ENCODE measurements at regions of chr2 and their contacts with region 1.

Region 1: DNA sequence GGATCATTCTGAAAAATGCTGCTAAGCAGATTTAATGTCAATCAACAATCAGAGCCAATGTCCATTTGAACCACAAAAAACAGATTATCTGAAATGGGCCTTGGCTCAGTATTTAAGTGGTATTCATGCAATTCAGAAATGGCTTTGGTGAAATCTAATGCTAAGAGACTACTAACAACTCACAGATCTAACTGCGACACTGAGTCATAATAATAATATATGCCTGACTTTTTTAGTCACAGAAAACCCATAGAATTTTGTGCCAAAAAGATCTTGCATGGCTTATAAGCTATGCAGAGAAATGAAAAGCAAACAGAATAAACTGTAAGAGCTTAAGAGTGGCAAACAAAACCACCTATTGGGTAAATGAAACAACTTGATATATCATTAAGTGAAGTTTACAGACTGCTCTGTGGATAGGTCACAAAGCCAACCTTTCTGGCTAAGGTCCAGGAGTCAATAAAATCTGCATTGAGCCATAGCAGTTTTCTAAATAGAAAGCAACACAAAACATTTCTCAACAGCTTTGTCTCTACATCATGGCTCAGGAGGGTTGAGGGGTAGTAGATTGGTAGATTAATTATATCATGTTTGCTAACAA is 234.3 kb downstream of the LRATD1 start:
- DNase-seq: no peak
- H3K4me3 ChIP-seq: no peak overlapping the region
- H3K27ac ChIP-seq: no peak overlapping the region
- H3K4me1 ChIP-seq: no peaks in the 10 kb centered on the region
- H3K27me3 ChIP-seq: no peaks in the 10 kb centered on the region
- CTCF ChIP-seq: no peak
- POLR2A ChIP-seq: no peak

Region 2: DNA sequence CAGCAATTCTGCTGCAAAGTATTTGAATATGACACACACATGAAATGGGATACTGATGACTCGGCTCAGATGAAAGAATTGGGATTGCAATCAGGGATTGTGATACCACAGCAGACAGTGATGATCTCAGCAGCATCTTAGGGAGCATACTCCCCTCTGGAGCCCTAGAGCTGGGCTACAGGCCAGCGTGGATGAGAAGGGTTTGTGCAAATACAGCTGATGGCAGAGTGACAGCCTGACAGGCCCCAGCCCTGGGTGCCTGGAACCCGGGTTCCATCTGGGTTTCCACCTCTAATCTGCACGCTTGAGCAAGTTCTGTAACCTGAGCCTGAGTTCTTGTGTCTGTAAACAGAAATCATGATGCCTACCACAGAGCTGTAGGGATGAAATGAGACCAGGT is 183.6 kb after region 1 on chr2:
- intact Hi-C with region 1: no loop called
- DNase-seq: peak in 1 of 2 donors; percentile 65
- H3K4me3 ChIP-seq: no peak overlapping the region
- H3K27ac ChIP-seq: no peak overlapping the region
- H3K4me1 ChIP-seq: no peaks in the 10 kb centered on the region
- H3K27me3 ChIP-seq: no peaks in the 10 kb centered on the region
- CTCF ChIP-seq: no peak
- POLR2A ChIP-seq: no peak

Region 3: DNA sequence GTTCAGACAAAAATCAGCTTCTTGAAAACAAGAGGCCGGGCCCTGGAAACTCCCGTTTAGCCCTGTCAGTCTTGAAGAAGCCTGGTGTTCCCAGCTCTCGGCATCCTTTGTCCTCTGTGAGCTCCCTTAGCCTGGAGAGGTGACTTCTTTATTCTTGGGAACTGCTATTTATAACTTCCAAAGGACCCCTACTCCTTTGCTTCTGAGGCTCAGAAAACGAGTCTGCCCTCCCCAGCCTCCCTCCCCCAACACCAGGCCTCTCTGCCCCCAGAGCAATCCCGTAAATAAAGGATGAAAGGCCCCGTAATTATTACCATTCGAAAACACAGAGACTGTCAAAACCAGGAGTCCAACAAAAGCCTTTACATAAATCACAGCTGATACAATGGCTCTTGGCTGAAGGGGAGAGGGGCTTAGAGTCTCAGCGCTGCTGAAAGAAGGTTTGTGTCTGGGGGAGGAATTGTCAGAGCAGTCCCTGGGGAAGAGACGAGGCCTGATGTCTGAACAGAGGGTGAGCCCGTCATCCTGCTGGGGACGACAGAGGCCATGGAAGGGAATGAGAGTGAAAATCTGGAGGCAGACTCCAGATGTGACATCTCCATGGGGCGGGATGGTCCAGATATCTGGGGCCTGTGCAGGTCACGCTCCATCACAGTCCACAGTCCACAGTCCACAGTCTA is 1356.4 kb after region 1 on chr2:
- intact Hi-C with region 1: loop called (anchors 5 kb)
- DNase-seq: no peak
- H3K4me3 ChIP-seq: no peak overlapping the region
- H3K27ac ChIP-seq: no peak overlapping the region
- H3K4me1 ChIP-seq: no peaks in the 10 kb centered on the region
- H3K27me3 ChIP-seq: no peaks in the 10 kb centered on the region
- CTCF ChIP-seq: no peak
- POLR2A ChIP-seq: no peak

Measured in vagina (tissue), 2 donors.